MCF 10A (cell line): ENCODE measurements at regions of chr17 and their contacts with region 1.

Region 1: DNA sequence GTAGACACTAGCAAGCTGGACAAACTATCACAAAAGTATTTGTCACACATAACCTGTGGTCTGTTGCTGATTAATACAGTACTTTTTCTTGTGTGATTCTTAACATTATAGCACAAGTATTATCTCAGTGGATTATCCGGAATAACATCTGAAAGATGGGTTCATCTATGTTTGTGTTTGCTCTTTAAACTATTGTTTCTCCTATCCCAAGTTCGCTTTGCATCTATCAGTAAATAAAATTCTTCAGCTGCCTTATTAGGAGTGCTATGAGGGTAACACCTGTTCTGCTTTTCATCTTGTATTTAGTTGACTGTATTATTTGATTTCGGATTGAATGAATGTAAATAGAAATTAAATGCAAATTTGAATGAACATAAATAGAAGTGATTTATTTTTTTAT is 14.5 kb downstream of the RNFT1 start:
- DNase-seq: no peak
- H3K4me3 Mint-ChIP-seq: no peak overlapping the region
- H3K27ac Mint-ChIP-seq: no peak overlapping the region
- H3K4me1 Mint-ChIP-seq: no peaks in the 10 kb centered on the region
- H3K27me3 Mint-ChIP-seq: no peaks in the 10 kb centered on the region
- CTCF ChIP-seq: no peak

Region 2: GRCh38 chr17:59964482-59965328 is 14.7 kb after region 1 on chr17 and contains the start of gene RNFT1:
- CTCF ChIA-PET with region 1: no interaction called
- POLR2A ChIA-PET with region 1: interaction called, 15 read pairs
- intact Hi-C with region 1: no loop called
- DNase-seq: peak; percentile 88
- H3K4me3 Mint-ChIP-seq: peak within 1 kb of the TSS; percentile 92
- H3K27ac Mint-ChIP-seq: peak within 1 kb of the TSS; percentile 89
- H3K4me1 Mint-ChIP-seq: peaks cover 11% of the 10 kb centered on the region
- H3K27me3 Mint-ChIP-seq: no peaks in the 10 kb centered on the region
- CTCF ChIP-seq: no peak
- total RNA-seq, gene RNFT1: 16.7 and 18.9 TPM in 2 replicates